MCF 10A (cell line): ENCODE measurements at regions of chr14 and their contacts with region 1.

Region 1: GRCh38 chr14:23631702-23632460 is 4.3 kb upstream of the DHRS2 start:
- DNase-seq: peak; percentile 91
- H3K4me3 Mint-ChIP-seq: no peak overlapping the region
- H3K27ac Mint-ChIP-seq: no peak overlapping the region
- H3K4me1 Mint-ChIP-seq: peaks cover 9% of the 10 kb centered on the region
- H3K27me3 Mint-ChIP-seq: no peaks in the 10 kb centered on the region
- CTCF ChIP-seq: peak; percentile 89

Region 2: GRCh38 chr14:23602181-23603095 is 29.4 kb before region 1 on chr14:
- CTCF ChIA-PET with region 1: interaction called, 12 read pairs
- POLR2A ChIA-PET with region 1: no interaction called
- intact Hi-C with region 1: no loop called
- DNase-seq: no peak
- H3K4me3 Mint-ChIP-seq: no peak overlapping the region
- H3K27ac Mint-ChIP-seq: no peak overlapping the region
- H3K4me1 Mint-ChIP-seq: no peaks in the 10 kb centered on the region
- H3K27me3 Mint-ChIP-seq: no peaks in the 10 kb centered on the region
- CTCF ChIP-seq: no peak

Region 3: DNA sequence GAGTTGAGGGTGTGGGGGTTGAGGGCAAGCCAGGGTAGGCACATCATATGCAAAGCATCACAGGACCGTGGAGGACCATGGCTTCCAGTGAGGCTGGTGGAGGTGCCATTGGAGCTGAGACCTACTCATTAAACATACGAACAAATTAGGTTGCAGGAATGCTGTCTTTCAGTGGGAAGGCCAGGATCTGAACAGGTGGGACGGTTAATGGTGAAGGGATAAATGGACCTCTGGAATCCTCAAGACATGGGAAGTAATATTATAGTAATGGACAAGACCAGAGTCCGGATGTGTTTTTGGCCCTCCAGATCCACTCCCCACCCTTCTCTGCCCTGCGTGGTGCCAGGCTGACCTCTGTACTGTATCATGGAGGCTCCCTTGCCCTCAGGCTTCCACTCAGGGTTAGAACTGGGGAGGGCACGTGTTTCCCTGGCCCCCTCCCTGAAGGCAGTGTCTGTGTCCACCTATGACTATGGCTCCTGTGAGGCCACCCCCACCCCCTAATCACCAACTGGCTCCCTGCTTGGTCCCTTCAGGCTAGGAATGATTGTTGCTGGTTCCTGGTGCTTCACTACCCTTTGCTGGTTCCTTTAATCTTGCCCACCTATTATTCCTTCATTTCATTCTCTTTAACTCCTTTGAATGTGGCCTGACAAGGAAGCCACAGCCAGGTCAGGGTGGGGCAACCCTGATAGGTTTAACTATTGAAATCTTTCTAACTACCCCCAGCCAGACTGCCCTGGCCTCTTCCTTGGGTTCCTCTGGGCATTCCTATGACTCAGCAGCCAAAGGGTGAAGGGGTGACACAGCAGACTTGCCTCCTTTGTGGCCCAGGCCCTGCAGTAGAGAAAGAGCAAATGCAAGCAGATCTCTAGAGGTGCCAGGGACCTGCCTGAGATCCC is 15.0 kb after region 1 on chr14:
- CTCF ChIA-PET with region 1: interaction called, 31 read pairs
- POLR2A ChIA-PET with region 1: no interaction called
- intact Hi-C with region 1: no loop called
- DNase-seq: peak; percentile 13
- H3K4me3 Mint-ChIP-seq: no peak overlapping the region
- H3K27ac Mint-ChIP-seq: no peak overlapping the region
- H3K4me1 Mint-ChIP-seq: no peaks in the 10 kb centered on the region
- H3K27me3 Mint-ChIP-seq: peaks cover 12% of the 10 kb centered on the region
- CTCF ChIP-seq: no peak

Region 4: GRCh38 chr14:23694085-23694975 is 62.4 kb after region 1 on chr14:
- CTCF ChIA-PET with region 1: interaction called, 13 read pairs
- POLR2A ChIA-PET with region 1: no interaction called
- intact Hi-C with region 1: no loop called
- DNase-seq: peak; percentile 11
- H3K4me3 Mint-ChIP-seq: no peak overlapping the region
- H3K27ac Mint-ChIP-seq: no peak overlapping the region
- H3K4me1 Mint-ChIP-seq: no peaks in the 10 kb centered on the region
- H3K27me3 Mint-ChIP-seq: no peaks in the 10 kb centered on the region
- CTCF ChIP-seq: no peak

Region 5: DNA sequence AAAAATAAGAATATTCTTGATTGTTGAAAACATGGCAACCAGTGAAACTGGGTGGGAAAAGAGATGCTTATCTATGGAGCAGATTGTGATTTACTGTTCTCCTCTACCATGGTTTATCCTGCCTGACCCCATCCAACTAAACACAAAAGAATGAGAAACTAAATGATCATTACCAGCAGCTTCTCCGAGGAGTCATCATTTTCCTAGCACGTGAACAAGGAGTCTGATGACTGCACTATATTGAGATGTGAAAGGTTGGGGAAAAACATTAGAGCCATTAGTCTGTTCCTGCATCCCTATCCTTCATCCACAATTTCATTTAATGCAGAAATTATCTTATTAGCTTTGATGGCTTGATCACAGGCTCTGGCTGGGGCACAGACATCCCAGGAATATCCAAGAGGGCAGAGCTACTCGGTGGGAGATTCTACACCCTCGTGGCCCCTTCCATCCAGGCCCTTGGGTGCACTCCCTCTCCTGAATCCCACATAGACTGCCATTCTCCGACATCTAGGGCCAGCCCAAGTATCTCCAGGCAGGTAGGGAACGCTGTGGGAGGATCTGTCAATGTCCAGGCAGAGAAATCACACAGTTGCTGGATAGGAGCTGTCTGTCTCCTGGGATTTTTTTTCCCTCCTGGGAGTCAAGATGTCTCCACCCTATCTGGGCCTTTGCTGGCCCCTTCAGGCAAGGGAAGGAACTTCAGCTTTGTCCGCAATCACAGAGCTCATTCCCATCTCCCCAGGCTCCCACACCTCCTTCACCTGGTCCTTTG is 278.4 kb after region 1 on chr14:
- CTCF ChIA-PET with region 1: interaction called, 212 read pairs
- POLR2A ChIA-PET with region 1: interaction called, 6 read pairs
- intact Hi-C with region 1: loop called (anchors 1 kb)
- DNase-seq: peak; percentile 75
- H3K4me3 Mint-ChIP-seq: no peak overlapping the region
- H3K27ac Mint-ChIP-seq: no peak overlapping the region
- H3K4me1 Mint-ChIP-seq: no peaks in the 10 kb centered on the region
- H3K27me3 Mint-ChIP-seq: peaks cover 19% of the 10 kb centered on the region
- CTCF ChIP-seq: peak; percentile 93

Region 6: DNA sequence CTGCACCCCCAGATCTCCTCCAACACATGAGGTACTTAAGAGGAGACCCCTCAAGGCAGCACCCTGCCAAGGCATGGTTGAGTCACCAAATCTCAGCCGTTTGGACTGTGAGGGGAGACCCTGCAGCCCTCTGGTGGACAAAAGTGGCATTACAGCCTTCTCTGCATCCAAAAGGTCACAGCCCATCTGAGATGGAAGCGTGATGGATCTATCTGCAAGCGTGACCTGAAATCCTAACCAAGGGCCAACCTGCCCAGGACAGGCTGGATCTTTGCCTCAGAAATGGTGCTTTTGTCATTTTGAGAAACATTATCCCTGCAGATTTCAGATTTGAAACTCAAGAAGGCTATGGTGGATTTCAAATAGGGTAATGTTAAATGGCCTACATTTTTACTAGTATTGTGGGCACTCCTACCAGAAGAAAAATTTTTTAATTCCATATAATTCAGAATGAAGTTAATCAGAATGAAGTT is 298.0 kb after region 1 on chr14:
- CTCF ChIA-PET with region 1: interaction called, 71 read pairs
- POLR2A ChIA-PET with region 1: interaction called, 3 read pairs
- intact Hi-C with region 1: loop called (anchors 1 kb)
- DNase-seq: peak; percentile 80
- H3K4me3 Mint-ChIP-seq: no peak overlapping the region
- H3K27ac Mint-ChIP-seq: no peak overlapping the region
- H3K4me1 Mint-ChIP-seq: no peaks in the 10 kb centered on the region
- H3K27me3 Mint-ChIP-seq: no peaks in the 10 kb centered on the region
- CTCF ChIP-seq: peak; percentile 73